Activated CD8-positive, alpha-beta T cell treated with anti-CD3 and anti-CD28 coated beads, Interleukin-2, amount 10 ng/mL, durations not matched to agents 7 days and 5 days (primary cell): ENCODE measurements at regions of chr6 and their contacts with region 1.

Region 1: DNA sequence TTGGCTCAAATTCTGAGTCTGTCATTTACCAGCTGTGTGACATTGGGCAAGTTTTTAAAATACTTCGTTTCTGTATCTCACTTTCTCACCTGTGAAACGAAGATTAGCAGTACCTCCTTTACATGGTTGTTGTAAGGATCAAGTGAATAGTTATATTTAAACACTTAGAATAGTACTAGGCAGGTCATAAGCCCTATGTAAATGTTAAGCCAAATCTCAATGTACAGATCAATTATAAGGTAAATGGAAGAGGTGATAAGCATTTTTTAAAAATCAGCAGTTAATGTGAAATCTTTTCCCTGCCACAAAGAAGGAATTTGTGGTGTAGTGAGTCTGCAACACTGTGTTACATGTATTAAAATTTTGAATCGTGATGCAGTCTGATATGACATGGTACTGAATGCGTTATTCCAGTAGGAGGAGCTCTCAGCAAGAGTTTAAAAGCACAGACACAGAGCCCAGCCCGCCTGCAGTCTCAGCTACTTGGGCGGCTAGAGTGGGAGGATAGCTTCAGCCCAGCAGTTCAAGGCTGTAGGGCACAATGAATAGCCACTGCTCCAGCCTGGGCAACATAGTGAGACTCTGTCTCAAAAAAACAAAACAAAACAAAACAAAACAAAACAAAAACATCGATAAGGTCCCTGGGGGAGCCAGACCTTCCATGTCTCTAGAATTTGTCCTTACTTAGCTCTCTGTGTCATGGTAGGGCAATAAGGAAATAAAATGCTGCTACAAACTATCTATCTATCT is 46.0 kb downstream of the GTF2H5 start:
- DNase-seq: peak; percentile 75
- ATAC-seq: peak; percentile 99
- H3K4me3 Mint-ChIP-seq: no peak overlapping the region
- H3K27ac Mint-ChIP-seq: no peak overlapping the region
- H3K4me1 Mint-ChIP-seq: peaks cover 12% of the 10 kb centered on the region
- H3K27me3 Mint-ChIP-seq: no peaks in the 10 kb centered on the region

Region 2: DNA sequence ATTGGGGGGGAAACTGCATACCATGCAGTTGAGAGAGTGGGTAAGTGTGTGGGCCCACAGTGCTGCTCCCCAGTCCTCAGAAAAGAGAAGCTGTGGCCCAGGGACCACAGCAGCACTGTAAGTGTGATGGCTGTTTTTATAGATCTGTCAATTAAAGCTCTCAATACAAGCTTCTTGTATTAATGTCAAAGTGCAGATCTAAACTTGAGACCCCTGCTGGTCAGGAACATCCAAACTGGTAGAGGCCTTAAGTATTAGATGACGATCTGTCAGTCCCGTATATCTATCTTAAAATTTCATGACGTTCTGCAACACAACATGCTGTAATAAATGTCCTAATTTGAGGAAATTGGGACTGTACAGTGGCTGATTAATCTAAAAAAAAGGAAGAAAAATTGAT is 172.9 kb after region 1 on chr6:
- CTCF ChIA-PET with region 1: interaction called, 10 read pairs
- POLR2A ChIA-PET with region 1: no interaction called
- DNase-seq: peak; percentile 29
- ATAC-seq: peak; percentile 27
- H3K4me3 Mint-ChIP-seq: no peak overlapping the region
- H3K27ac Mint-ChIP-seq: no peak overlapping the region
- H3K4me1 Mint-ChIP-seq: no peaks in the 10 kb centered on the region
- H3K27me3 Mint-ChIP-seq: no peaks in the 10 kb centered on the region

Region 3: GRCh38 chr6:158554611-158555361 is 340.7 kb after region 1 on chr6:
- CTCF ChIA-PET with region 1: interaction called, 11 read pairs
- POLR2A ChIA-PET with region 1: no interaction called
- DNase-seq: no peak
- ATAC-seq: no peak
- H3K4me3 Mint-ChIP-seq: no peak overlapping the region
- H3K27ac Mint-ChIP-seq: no peak overlapping the region
- H3K4me1 Mint-ChIP-seq: peaks cover 14% of the 10 kb centered on the region
- H3K27me3 Mint-ChIP-seq: peaks cover 16% of the 10 kb centered on the region

Region 4: DNA sequence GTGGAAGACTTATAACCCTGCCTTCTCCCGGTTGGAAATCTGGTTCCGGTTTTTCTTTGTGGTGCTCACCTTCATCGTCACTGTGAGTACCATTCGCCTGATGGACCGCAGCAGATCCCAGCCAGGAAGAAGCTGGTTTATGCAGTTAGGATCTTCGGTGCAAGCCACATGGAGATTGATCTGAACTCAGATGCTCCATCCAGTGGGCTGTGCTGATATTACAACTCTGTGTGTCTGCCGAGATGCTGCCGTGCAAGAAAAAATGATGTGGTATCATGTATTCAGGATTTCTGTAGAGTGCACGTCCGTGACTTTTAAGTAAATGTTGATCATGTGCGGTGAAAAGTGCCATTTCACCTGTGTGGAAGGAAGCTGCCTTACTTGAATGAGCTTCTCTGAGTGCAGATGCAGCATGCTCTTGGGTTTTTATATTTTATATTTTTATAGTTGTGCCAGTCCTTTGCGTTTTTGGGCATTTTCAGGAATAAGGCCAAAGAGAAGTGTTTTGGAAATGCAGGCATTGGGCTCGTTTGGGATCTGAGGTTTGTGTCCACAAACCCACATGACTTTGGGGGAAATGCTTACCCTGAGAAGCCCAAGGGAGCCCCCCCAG is 391.3 kb after region 1 on chr6:
- CTCF ChIA-PET with region 1: interaction called, 23 read pairs
- POLR2A ChIA-PET with region 1: no interaction called
- DNase-seq: peak; percentile 68
- ATAC-seq: peak; percentile 51
- H3K4me3 Mint-ChIP-seq: no peak overlapping the region
- H3K27ac Mint-ChIP-seq: no peak overlapping the region
- H3K4me1 Mint-ChIP-seq: peaks cover 7% of the 10 kb centered on the region
- H3K27me3 Mint-ChIP-seq: no peaks in the 10 kb centered on the region

Region 5: GRCh38 chr6:158686791-158687381 is 472.8 kb after region 1 on chr6:
- CTCF ChIA-PET with region 1: interaction called, 49 read pairs
- POLR2A ChIA-PET with region 1: no interaction called
- DNase-seq: peak; percentile 66
- ATAC-seq: peak; percentile 94
- H3K4me3 Mint-ChIP-seq: peak overlapping the region; percentile 39
- H3K27ac Mint-ChIP-seq: peak overlapping the region; percentile 88
- H3K4me1 Mint-ChIP-seq: peaks cover 65% of the 10 kb centered on the region
- H3K27me3 Mint-ChIP-seq: no peaks in the 10 kb centered on the region